K562 (cell line): ENCODE measurements at regions of chr2 and their contacts with region 1.

Region 1: DNA sequence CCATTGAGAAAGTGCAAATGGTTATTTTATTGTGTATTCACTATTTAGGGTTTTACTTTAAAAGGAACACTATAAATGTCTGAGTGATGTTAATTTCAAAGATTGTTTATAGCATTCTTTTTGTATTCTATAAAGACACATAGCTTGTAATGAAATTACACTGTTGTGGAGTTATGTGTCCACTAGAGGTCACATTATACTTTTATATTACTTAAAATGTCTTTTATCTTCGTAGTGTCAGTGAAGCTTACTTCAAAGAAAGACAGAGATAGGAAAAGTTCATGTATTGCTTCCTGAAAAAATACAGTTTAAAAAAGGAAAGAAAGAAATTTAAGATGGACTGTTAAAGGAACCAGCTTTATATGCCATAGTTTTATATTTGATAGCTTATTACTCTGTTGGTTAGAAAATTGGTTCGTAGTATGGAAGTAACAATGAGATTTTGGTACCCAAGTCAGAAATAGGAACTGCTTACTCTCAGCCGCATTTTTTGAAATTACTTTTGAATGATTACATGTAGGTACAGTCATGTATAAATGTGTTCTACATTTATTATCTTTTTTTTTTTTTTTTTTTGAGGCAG is 20.5 kb downstream of the APLF start:
- DNase-seq: peak; percentile 11 to 44 (median 24)
- ATAC-seq: peak; percentile 72
- H3K4me3 ChIP-seq: no peak overlapping the region
- H3K27ac ChIP-seq: no peak overlapping the region
- H3K4me1 ChIP-seq: no peaks in the 10 kb centered on the region
- H3K27me3 ChIP-seq: no peaks in the 10 kb centered on the region
- CTCF ChIP-seq: peak in 2 of 3 experiments; percentile 33 to 76; a peak in 4 of 6 replicates
- EP300 ChIP-seq: no peak
- POLR2A ChIP-seq: no peak
- RAD21 ChIP-seq: peak; percentile 72 to 89

Region 2: DNA sequence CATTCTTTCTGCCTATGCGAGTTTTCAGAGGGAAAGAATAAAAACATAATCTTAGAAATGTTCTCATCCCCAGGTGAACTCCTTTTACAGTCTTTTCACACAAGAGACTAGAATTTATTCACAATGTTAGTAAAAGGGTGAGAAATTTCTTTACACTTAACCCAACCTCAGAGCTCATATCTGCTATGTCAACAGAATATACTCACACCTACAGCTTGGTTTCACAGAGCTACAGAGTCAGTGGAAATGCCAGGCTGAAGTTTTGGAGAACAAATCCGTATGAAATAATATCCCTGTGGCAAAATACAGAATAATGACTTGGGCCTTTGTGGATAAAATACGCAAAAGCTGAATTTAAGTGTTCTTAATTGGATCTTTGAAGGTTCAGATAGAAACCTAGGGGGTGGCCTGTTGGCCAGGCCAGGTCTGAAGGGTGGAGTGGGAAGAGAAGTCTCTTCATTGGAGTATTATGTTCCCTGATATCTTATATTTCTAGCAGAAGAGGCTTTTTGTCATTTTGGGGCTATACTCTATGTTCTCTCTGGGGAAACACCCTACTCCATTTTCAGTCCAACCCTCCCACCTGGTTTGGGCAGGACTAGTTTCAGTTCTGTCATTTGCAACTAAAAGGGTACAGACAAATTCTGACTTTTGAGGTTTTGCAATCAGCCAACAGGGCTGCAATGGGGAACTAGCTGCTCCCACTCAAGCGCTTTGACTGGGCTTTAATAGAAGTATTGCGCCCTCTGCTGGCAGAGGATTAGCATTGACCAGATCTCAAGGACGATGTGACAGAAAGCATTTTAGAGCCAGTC is 46.5 kb before region 1 on chr2:
- CTCF ChIA-PET with region 1: no interaction called
- POLR2A ChIA-PET with region 1: no interaction called
- in situ Hi-C with region 1: no loop called
- intact Hi-C with region 1: no loop called
- DNase-seq: peak; percentile 67 to 95 (median 72)
- ATAC-seq: peak; percentile 94
- H3K4me3 ChIP-seq: no peak overlapping the region
- H3K27ac ChIP-seq: peak overlapping the region; percentile 53; the same call in 2 of the 3 replicates
- H3K4me1 ChIP-seq: peaks cover 4 to 29% of the 10 kb centered on the region in 2 experiments; a peak in 4 of 5 replicates
- H3K27me3 ChIP-seq: no peaks in the 10 kb centered on the region
- CTCF ChIP-seq: peak; percentile 88 to 97 (median 96)
- EP300 ChIP-seq: peak; percentile 56; the same call in 1 of the 2 replicates
- POLR2A ChIP-seq: no peak
- RAD21 ChIP-seq: peak; percentile 99

Region 3: DNA sequence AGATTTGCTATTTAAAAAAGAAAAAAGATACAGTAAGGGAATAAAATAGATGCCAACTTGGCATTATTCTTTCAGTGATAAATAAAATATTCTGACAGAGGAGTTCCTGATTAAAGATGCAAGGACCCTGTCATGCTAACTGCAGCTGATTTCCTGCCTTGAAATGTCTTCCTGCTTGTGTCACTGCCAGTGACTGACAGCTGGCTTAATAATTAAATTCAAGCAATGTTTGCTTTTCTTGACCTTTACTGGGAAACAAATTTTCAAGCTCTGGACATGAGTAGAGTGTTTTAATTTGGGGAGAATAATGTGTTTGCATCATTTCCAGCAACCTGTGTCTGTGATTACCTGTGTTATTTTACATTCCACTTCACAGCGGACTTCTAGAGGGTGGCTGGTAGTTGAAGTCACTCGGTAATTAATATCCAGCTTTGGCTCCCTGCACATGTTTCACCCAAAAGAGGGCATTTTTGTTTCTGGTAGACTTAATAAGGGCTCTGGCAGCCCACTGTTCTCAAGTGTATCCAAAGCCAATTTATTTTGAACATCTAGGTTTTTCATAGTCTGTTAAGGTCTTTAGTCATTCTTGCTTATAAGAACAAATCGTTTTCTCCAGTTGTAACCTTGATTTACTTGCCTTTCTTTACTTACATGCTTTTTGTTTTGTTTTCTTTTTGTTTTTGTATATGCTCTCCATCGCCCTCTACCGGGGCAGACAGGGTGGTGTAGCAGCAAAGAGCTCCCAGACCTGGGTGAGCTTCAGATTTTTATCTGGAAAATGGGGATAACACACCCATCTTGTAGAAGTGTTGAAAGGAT is 107.0 kb after region 1 on chr2:
- CTCF ChIA-PET with region 1: interaction called, 4 read pairs
- POLR2A ChIA-PET with region 1: no interaction called
- in situ Hi-C with region 1: no loop called
- intact Hi-C with region 1: loop called (anchors 5 kb)
- DNase-seq: peak; percentile 75 to 78 (median 76)
- ATAC-seq: peak; percentile 86
- H3K4me3 ChIP-seq: no peak overlapping the region
- H3K27ac ChIP-seq: no peak overlapping the region
- H3K4me1 ChIP-seq: peaks cover 5 to 17% of the 10 kb centered on the region in 2 experiments; a peak in 3 of 5 replicates
- H3K27me3 ChIP-seq: no peaks in the 10 kb centered on the region
- CTCF ChIP-seq: peak; percentile 72 to 91 (median 80)
- EP300 ChIP-seq: no peak
- POLR2A ChIP-seq: no peak
- RAD21 ChIP-seq: peak in 1 of 2 experiments; percentile 62; a peak in 3 of 4 replicates

Region 4: DNA sequence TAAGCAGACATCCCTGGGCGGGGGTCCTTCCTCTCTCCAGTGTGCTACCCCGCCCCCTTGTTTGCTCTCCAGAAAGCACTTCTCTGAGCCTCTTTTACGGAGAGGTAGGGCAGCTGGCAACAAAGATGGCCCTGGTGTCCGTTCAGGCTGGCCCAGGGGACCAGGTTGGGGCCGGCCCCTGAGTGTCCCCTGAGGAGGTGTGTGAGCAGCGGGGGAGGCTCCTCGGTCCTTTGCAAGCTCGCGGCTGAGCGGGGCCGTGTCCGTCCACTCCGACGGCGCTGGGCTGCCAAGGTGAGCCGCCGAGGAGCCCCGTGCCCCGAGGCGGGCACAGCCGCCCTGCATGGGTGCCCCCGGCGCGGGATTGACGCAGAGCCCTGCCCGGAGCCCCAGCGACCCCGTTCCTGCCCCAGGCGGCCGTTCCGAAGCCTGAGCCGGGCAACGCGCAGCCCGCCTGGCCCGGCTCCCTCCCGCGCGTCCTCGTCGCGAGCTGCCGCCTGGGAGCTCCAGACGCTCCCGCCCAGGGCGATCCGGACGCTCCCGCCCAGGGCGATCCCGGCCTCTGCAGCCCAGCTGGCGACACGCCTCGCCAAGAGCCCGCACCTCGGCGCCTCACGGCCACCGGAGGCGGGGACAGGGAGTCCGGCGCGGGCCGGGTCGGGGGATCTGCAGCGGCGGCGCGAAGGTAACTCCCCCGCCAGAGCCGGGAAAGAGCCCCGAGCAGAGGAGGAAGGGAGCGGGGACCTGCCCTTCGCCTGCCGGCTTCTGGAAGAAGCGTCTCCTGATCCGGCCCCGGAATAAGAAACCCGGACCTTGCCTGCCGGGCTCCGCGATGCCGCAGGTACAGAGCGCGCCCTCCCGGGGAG is 155.4 kb after region 1 on chr2 and contains the start of gene PROKR1:
- CTCF ChIA-PET with region 1: interaction called, 11 read pairs
- POLR2A ChIA-PET with region 1: no interaction called
- in situ Hi-C with region 1: loop called (anchors 25 kb)
- intact Hi-C with region 1: loop called (anchors 1 kb)
- DNase-seq: peak; percentile 53 to 67 (median 58)
- ATAC-seq: peak; percentile 88
- H3K4me3 ChIP-seq: peak within 1 kb of the TSS; percentile 55
- H3K27ac ChIP-seq: no peak within 1 kb of the TSS
- H3K4me1 ChIP-seq: peaks cover 0 to 12% of the 10 kb centered on the region in 2 experiments; a peak in 3 of 5 replicates
- H3K27me3 ChIP-seq: peaks cover 2 to 12% of the 10 kb centered on the region in 2 experiments; a peak in 1 of 5 replicates
- CTCF ChIP-seq: peak in 1 of 3 experiments; percentile 23; a peak in 1 of 6 replicates
- EP300 ChIP-seq: no peak
- POLR2A ChIP-seq: no peak
- RAD21 ChIP-seq: peak; percentile 34 to 57; a peak in 3 of 4 replicates
- polyA plus RNA-seq, gene PROKR1: 0.03 TPM in 1 of 2 experiments, not detected in the other

Region 5: GRCh38 chr2:68709421-68709911 is 221.6 kb after region 1 on chr2:
- CTCF ChIA-PET with region 1: no interaction called
- POLR2A ChIA-PET with region 1: interaction called, 4 read pairs
- in situ Hi-C with region 1: loop called (anchors 10 kb)
- intact Hi-C with region 1: loop called (anchors 2 kb)
- DNase-seq: peak; percentile 25 to 62 (median 43)
- ATAC-seq: peak; percentile 94
- H3K4me3 ChIP-seq: no peak overlapping the region
- H3K27ac ChIP-seq: no peak overlapping the region
- H3K4me1 ChIP-seq: no peaks in the 10 kb centered on the region; a peak in 1 of 5 replicates
- H3K27me3 ChIP-seq: no peaks in the 10 kb centered on the region; a peak in 1 of 5 replicates
- CTCF ChIP-seq: peak; percentile 56 to 81 (median 76); a peak in 5 of 6 replicates
- EP300 ChIP-seq: no peak
- POLR2A ChIP-seq: no peak
- RAD21 ChIP-seq: peak; percentile 75 to 83

Region 6: GRCh38 chr2:68715353-68716041 is 227.6 kb after region 1 on chr2:
- CTCF ChIA-PET with region 1: interaction called, 3 read pairs
- POLR2A ChIA-PET with region 1: interaction called, 4 read pairs
- in situ Hi-C with region 1: no loop called
- intact Hi-C with region 1: loop called (anchors 2 kb)
- DNase-seq: peak; percentile 72 to 81 (median 76)
- ATAC-seq: peak; percentile 99
- H3K4me3 ChIP-seq: no peak overlapping the region
- H3K27ac ChIP-seq: no peak overlapping the region
- H3K4me1 ChIP-seq: peaks cover 0 to 6% of the 10 kb centered on the region in 2 experiments; a peak in 2 of 5 replicates
- H3K27me3 ChIP-seq: no peaks in the 10 kb centered on the region
- CTCF ChIP-seq: peak; percentile 84 to 88 (median 84)
- EP300 ChIP-seq: no peak
- POLR2A ChIP-seq: no peak
- RAD21 ChIP-seq: peak; percentile 54 to 84

Region 7: DNA sequence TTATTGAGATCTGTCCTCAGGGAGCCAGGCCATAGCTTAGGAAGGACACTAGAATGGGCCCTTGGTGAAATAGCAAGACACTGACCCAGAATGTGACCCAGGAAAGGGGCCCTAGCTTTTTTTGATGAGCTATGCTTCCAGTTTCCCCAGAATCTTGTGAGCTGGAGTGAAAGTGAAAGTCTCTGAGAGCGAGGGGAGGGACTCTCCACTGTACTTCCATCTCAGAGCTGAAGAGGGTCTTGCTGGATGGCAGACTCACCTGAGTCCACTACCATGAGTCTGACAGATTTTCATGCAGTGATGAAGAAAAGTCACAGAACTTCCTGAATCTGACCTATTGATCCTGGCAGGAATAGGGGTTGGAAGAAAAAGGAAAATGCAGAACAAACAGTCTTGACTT is 249.8 kb after region 1 on chr2:
- CTCF ChIA-PET with region 1: no interaction called
- POLR2A ChIA-PET with region 1: no interaction called
- in situ Hi-C with region 1: no loop called
- intact Hi-C with region 1: no loop called
- DNase-seq: no peak
- ATAC-seq: no peak
- H3K4me3 ChIP-seq: no peak overlapping the region
- H3K27ac ChIP-seq: no peak overlapping the region
- H3K4me1 ChIP-seq: peaks cover 0 to 11% of the 10 kb centered on the region in 2 experiments; a peak in 2 of 5 replicates
- H3K27me3 ChIP-seq: no peaks in the 10 kb centered on the region
- CTCF ChIP-seq: no peak
- EP300 ChIP-seq: no peak
- POLR2A ChIP-seq: no peak
- RAD21 ChIP-seq: no peak